ENCODE measurements at regions of chr20 and their contacts with region 1.

Region 1: GRCh38 chr20:63478346-63479302 is 6.2 kb upstream of the KCNQ2 start:
- DNase-seq: no peak
- ATAC-seq: no peak

Region 2: DNA sequence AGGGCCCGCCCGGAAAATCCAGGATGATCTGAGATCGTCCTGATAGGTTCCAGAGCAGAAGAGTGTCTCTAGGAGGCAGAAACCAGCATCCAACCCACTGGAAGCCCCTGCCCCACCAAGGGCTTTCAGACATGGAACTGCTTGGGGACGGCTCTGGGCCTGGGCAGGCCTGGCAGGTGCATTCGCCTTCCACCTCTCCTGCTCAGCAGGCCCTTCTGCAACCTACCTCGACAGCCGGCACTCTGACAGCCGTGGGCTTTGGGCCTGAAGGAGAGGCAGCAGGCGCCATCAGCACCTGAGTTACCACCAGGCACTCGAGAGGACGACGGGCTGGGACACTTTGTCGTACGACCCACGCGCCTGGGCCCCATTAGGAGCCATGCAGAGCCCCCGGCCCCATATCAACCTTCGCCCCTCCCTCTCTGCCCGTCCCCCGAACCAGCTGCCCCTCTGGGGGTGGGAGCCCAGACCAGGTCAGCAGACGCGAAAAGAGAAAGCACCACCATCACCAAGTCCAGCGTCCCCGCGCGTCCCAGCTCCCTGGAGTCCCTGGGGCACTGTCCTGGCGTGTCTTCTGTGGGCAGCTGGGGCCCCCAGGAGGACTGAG is 50.8 kb before region 1 on chr20:
- intact Hi-C with region 1: loop called (anchors 2 kb)
- DNase-seq: no peak
- ATAC-seq: no peak

Region 3: DNA sequence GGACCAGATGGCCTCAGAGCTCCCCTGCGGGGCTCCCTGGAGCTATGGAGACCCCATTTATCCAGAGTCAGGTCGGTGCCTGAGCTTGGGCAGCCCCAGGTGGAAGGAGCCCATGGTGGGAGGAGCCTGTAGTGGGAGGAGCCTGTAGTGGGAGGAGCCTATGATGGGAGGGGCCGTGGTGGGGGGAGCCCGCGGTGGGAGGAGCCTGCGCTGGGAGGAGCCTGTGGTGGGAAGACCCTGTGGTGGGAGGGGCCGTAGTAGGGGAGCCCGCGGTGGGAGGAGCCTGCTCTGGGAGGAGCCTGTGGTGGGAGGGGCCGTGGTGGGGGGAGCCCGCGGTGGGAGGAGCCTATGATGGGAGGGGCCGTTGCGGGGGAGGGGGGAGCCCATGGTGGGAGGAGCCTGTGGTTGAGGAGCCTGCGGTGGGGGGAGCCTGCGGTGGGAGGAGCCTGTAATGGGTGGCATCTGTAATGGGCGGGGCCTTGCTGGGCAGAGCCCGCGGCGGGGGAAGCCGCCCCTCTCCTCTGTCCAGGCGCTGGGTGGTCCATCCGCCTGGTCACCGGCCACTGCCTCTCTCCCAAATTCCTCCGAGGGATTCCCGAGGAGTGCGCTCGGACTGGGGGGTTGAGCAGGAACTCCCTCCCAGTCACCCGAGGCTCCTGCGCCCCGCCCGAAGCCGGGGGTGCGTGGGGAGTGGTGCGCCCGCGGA is 74.8 kb after region 1 on chr20:
- intact Hi-C with region 1: no loop called
- DNase-seq: peak; percentile 94
- ATAC-seq: peak; percentile 90